Right lobe of liver (tissue), 6 donors: ENCODE measurements at regions of chr6 and their contacts with region 1.

Region 1: DNA sequence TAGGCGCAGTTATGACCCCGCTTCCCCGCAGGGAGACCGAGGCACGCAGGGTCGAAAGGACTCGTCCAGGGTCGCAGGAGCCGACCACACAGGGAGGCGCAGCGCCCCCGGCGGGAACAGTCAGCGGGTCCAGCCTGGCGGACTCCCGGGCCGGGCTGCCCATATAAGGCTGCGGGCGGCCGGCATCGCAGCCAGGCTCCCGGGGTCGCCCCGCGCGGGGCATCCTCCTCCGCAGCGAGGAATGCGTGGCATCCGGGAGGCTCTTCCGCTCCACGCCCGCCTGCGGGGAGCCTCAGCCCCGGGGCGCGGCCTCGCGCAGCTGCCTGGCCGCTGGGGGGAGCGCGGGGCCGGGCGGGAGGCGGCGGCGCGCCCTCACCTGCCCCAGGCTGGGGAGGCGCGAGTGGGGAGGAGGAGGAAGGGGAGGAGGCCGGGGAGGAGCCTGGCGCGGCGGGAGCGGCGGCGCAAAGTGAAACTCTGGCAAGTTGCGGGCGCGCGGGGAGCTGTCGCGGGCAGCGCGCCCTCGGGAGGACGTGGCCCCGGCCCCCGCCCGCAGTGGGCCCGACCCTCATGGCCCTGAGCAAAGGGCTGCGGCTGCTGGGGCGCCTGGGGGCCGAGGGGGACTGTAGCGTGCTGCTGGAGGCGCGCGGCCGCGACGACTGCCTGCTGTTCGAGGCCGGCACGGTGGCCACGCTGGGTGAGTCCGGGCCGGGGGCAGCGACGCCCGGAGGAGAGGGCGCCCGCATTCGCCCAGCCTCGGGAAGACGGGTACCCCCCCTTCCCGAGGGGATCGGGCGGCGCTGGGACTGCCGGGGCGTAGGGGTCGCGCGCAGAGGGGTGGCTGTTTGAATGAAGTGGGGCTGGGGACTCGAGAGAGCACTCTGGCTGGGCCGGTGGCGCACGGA is at the start of gene SYNJ2:
- DNase-seq: peak; percentile 89 to 92 (median 92)
- ATAC-seq: peak; percentile 81 to 95 (median 88)
- H3K4me3 ChIP-seq: peak within 1 kb of the TSS; percentile 77 to 94 (median 94)
- H3K27ac ChIP-seq: peak within 1 kb of the TSS; percentile 68 to 87 (median 80)
- H3K4me1 ChIP-seq: peaks cover 0 to 25% (median 10%) of the 10 kb centered on the region in 4 donors
- H3K27me3 ChIP-seq: no peaks in the 10 kb centered on the region
- CTCF ChIP-seq: peak; percentile 49 to 66 (median 57)
- POLR2A ChIP-seq: peak; percentile 62
- total RNA-seq, gene SYNJ2: 3.2 to 7.4 (median 4.2) TPM

Region 2: GRCh38 chr6:157764178-157765033 is 217.2 kb before region 1 on chr6:
- intact Hi-C with region 1: no loop called
- DNase-seq: peak in 2 of 3 donors; percentile 83
- ATAC-seq: peak; percentile 68 to 81 (median 72)
- H3K4me3 ChIP-seq: no peak overlapping the region
- H3K27ac ChIP-seq: peak overlapping the region; percentile 29 to 75 (median 71)
- H3K4me1 ChIP-seq: peaks cover 0 to 6% (median 4%) of the 10 kb centered on the region in 4 donors
- H3K27me3 ChIP-seq: no peaks in the 10 kb centered on the region
- CTCF ChIP-seq: no peak
- POLR2A ChIP-seq: peak; percentile 16

Region 3: GRCh38 chr6:158072083-158072721 is 90.6 kb after region 1 on chr6:
- intact Hi-C with region 1: loop called (anchors 5 kb)
- DNase-seq: peak; percentile 70 to 75 (median 72)
- ATAC-seq: peak; percentile 87 to 96 (median 90)
- H3K4me3 ChIP-seq: no peak overlapping the region
- H3K27ac ChIP-seq: no peak overlapping the region
- H3K4me1 ChIP-seq: no peaks in the 10 kb centered on the region
- H3K27me3 ChIP-seq: no peaks in the 10 kb centered on the region
- CTCF ChIP-seq: peak; percentile 76 to 85 (median 78)
- POLR2A ChIP-seq: no peak